ENCODE measurements at regions of chr6 and their contacts with region 1.

Region 1: GRCh38 chr6:85865420-85866369 is 223.0 kb upstream of the SYNCRIP start:
- DNase-seq: peak; percentile 74
- ATAC-seq: peak; percentile 71
- H3K4me3 ChIP-seq: peak overlapping the region; percentile 54 to 63 (median 61)
- H3K27ac ChIP-seq: no peak overlapping the region
- H3K4me1 ChIP-seq: peaks cover 32% of the 10 kb centered on the region
- H3K27me3 ChIP-seq: no peaks in the 10 kb centered on the region
- CTCF ChIP-seq: no peak
- EP300 ChIP-seq: no peak
- POLR2A ChIP-seq: no peak
- RAD21 ChIP-seq: no peak

Region 2: DNA sequence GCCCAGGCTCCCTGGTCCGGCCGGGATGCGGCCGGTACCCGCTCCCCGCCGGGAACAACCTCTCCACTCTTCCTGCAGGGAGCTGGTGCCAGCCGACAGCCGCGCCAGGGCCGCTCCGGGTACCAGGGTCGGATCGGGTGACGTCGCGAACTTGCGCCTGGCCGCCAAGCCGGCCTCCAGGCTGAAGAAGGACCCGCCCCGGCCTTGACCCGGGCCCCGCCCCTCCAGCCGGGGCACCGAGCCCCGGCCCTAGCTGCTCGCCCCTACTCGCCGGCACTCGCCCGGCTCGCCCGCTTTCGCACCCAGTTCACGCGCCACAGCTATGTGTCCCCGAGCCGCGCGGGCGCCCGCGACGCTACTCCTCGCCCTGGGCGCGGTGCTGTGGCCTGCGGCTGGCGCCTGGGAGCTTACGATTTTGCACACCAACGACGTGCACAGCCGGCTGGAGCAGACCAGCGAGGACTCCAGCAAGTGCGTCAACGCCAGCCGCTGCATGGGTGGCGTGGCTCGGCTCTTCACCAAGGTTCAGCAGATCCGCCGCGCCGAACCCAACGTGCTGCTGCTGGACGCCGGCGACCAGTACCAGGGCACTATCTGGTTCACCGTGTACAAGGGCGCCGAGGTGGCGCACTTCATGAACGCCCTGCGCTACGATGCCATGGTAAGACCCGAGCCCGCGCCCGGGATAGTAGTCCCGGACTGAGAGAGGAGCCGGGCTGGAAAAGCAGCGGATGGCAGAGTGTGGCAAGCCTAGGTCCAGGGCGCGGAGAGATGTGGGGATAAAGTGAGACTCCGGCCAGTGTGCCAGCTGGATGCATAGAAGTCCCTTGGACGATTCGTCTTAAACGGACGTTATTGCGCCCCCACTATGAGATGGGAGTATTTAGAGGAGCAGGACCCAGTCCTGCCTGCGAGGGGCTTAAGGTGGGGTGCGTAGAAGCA is 415.6 kb before region 1 on chr6 and contains the start of gene NT5E:
- CTCF ChIA-PET with region 1: no interaction called
- POLR2A ChIA-PET with region 1: no interaction called
- in situ Hi-C with region 1: no loop called
- intact Hi-C with region 1: no loop called
- DNase-seq: peak; percentile 24
- ATAC-seq: peak; percentile 79
- H3K4me3 ChIP-seq: peak within 1 kb of the TSS; percentile 76 to 88 (median 79)
- H3K27ac ChIP-seq: peak within 1 kb of the TSS; percentile 84
- H3K4me1 ChIP-seq: peaks cover 69% of the 10 kb centered on the region
- H3K27me3 ChIP-seq: no peaks in the 10 kb centered on the region; a peak in 1 of 5 replicates
- CTCF ChIP-seq: peak; percentile 38; the same call in 1 of the 2 replicates
- EP300 ChIP-seq: 0 out of 4 replicates have a peak, but pooled peaks of 1 of the 2 experiments have one; percentile 11
- POLR2A ChIP-seq: peak; percentile 49 to 83; a peak in 3 of 4 replicates
- RAD21 ChIP-seq: 0 out of 2 replicates have a peak, but pooled peaks have one; percentile 20
- total RNA-seq, gene NT5E: 6.4 and 9.5 TPM in 2 replicates

Region 3: GRCh38 chr6:85764844-85765243 is 100.9 kb before region 1 on chr6:
- CTCF ChIA-PET with region 1: no interaction called
- POLR2A ChIA-PET with region 1: no interaction called
- in situ Hi-C with region 1: no loop called
- intact Hi-C with region 1: loop called (anchors 10 kb)
- DNase-seq: peak; percentile 32
- ATAC-seq: peak; percentile 70
- H3K4me3 ChIP-seq: no peak overlapping the region
- H3K27ac ChIP-seq: no peak overlapping the region
- H3K4me1 ChIP-seq: peaks cover 11% of the 10 kb centered on the region
- H3K27me3 ChIP-seq: no peaks in the 10 kb centered on the region
- CTCF ChIP-seq: no peak
- EP300 ChIP-seq: no peak
- POLR2A ChIP-seq: no peak
- RAD21 ChIP-seq: no peak

Region 4: GRCh38 chr6:85892346-85892745 is 26.7 kb after region 1 on chr6:
- CTCF ChIA-PET with region 1: no interaction called
- POLR2A ChIA-PET with region 1: no interaction called
- in situ Hi-C with region 1: no loop called
- intact Hi-C with region 1: no loop called
- DNase-seq: no peak
- ATAC-seq: no peak
- H3K4me3 ChIP-seq: no peak overlapping the region
- H3K27ac ChIP-seq: no peak overlapping the region
- H3K4me1 ChIP-seq: no peaks in the 10 kb centered on the region
- H3K27me3 ChIP-seq: no peaks in the 10 kb centered on the region
- CTCF ChIP-seq: no peak
- EP300 ChIP-seq: no peak
- POLR2A ChIP-seq: no peak
- RAD21 ChIP-seq: no peak

Region 5: GRCh38 chr6:85975957-85976356 is 110.3 kb after region 1 on chr6:
- CTCF ChIA-PET with region 1: no interaction called
- POLR2A ChIA-PET with region 1: no interaction called
- in situ Hi-C with region 1: no loop called
- intact Hi-C with region 1: no loop called
- DNase-seq: no peak
- ATAC-seq: no peak
- H3K4me3 ChIP-seq: no peak overlapping the region
- H3K27ac ChIP-seq: no peak overlapping the region
- H3K4me1 ChIP-seq: no peaks in the 10 kb centered on the region
- H3K27me3 ChIP-seq: peaks cover 0 to 3% of the 10 kb centered on the region in 2 experiments; a peak in 2 of 5 replicates
- CTCF ChIP-seq: no peak
- EP300 ChIP-seq: no peak
- POLR2A ChIP-seq: no peak
- RAD21 ChIP-seq: no peak